Common myeloid progenitor, CD34-positive (primary cell): ENCODE measurements at regions of chr3 and their contacts with region 1.

Region 1: DNA sequence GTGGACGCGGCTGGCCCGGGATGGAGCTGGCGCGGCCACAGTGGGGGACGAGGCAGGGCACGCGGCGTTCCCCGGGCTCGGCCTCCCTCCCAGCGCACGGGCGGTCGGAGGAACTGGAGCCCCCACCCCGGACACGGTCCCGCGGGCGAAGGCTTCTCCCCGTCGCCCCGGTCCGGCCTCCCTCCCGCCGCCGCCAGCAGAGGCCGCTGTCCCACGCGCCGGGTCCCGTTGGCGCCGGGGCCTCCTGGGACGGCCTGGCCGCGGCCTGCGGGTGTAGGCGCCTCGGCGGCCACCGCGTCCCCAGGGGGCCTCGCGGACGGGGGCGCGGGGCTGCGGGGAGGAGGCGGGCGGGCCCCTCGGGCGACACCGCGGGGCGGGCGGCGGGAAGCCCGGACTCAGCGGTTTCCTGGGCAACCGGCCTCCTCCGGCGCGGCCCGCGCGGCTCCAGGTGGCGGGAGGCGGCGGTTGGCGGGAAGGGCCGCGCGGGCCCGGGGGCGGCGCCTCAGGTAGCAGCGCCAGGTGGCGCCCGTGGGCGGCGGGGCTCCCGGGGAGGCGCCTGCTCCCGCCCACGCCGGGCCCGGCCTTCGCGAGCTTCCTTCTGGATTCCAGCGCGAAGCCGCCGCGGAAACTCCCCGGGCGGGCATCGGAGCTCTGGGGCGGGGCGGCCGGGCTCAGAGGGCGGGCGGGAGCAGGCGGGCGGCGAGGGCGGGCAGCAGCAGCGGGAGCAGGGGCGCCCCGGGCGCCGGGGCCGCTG is 26.7 kb downstream of the MELTF start:
- DNase-seq: peak; percentile 75 to 88 (median 84)
- H3K4me3 ChIP-seq: peak overlapping the region; percentile 9 to 78 (median 41)
- H3K27ac ChIP-seq: no peak overlapping the region
- H3K4me1 ChIP-seq: peaks cover 0 to 16% (median 13%) of the 10 kb centered on the region in 4 experiments
- H3K27me3 ChIP-seq: no peaks in the 10 kb centered on the region

Region 2: GRCh38 chr3:197023241-197023997 is 20.5 kb after region 1 on chr3:
- CTCF ChIA-PET with region 1: interaction called, 56 read pairs
- POLR2A ChIA-PET with region 1: interaction called, 4 read pairs
- DNase-seq: peak in 2 of 3 donors; percentile 69 to 78
- H3K4me3 ChIP-seq: peak overlapping the region in 3 of 7 experiments; percentile 33 to 66 (median 46)
- H3K27ac ChIP-seq: no peak overlapping the region
- H3K4me1 ChIP-seq: peaks cover 0 to 26% (median 20%) of the 10 kb centered on the region in 4 experiments
- H3K27me3 ChIP-seq: peaks cover 0 to 1% (median 0%) of the 10 kb centered on the region in 5 experiments

Region 3: GRCh38 chr3:197029511-197030167 is 26.8 kb after region 1 on chr3 and contains the start of gene MELTF:
- CTCF ChIA-PET with region 1: interaction called, 56 read pairs
- POLR2A ChIA-PET with region 1: no interaction called
- DNase-seq: peak; percentile 63 to 77 (median 74)
- H3K4me3 ChIP-seq: peak within 1 kb of the TSS; percentile 43 to 79 (median 69)
- H3K27ac ChIP-seq: no peak within 1 kb of the TSS
- H3K4me1 ChIP-seq: peaks cover 0 to 30% (median 21%) of the 10 kb centered on the region in 4 experiments
- H3K27me3 ChIP-seq: peaks cover 0 to 2% (median under 1%) of the 10 kb centered on the region in 5 experiments